AG04450 (cell line): ENCODE measurements at regions of chr9 and their contacts with region 1.

Region 1: DNA sequence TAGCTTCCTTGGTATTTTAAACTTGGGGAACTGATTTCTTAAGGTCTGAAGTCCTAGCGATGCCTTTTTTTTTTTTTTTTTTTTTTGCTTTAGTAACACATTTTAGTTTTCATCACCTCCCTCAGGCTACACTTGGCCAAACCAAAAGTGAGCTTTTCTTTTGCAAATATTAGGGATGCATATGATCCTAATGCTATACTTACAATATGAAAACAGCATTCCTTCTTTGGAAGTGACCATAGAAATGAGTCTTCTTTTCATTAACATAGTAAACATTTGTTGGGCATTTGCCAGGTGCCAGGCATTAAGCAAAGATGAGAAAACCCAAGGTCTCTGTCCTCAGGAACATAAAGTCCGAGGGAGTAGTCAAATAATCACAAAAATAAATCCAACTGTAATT is 189.8 kb downstream of the ALDH1A1 start:
- DNase-seq: no peak
- H3K4me3 ChIP-seq: no peak overlapping the region
- H3K27ac ChIP-seq: no peak overlapping the region
- H3K27me3 ChIP-seq: no peaks in the 10 kb centered on the region
- CTCF ChIP-seq: no peak

Region 2: DNA sequence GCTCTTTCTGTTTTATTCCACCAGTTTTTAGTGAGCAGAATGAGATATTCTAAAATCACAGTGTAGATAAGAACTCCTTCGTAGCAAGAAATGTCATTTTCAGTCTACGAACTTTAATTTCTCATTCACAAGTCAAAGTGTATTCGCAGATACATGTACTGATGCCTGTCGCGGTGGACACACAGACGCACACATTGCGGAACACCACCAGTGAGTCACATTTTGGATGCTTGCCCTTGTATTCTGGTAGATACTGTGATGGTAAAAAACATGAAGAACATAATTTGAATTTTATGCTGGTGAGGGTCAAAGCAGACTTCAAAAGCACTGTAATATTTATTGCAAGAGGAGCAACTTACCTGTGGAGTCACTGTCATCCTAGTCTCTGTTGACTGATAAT is 697.9 kb before region 1 on chr9:
- CTCF ChIA-PET with region 1: interaction called, 10 read pairs
- POLR2A ChIA-PET with region 1: no interaction called
- DNase-seq: no peak
- H3K4me3 ChIP-seq: no peak overlapping the region
- H3K27ac ChIP-seq: no peak overlapping the region
- H3K27me3 ChIP-seq: no peaks in the 10 kb centered on the region
- CTCF ChIP-seq: no peak

Region 3: GRCh38 chr9:72931437-72931836 is 168.4 kb after region 1 on chr9:
- CTCF ChIA-PET with region 1: no interaction called
- POLR2A ChIA-PET with region 1: no interaction called
- DNase-seq: no peak
- H3K4me3 ChIP-seq: no peak overlapping the region
- H3K27ac ChIP-seq: no peak overlapping the region
- H3K27me3 ChIP-seq: no peaks in the 10 kb centered on the region
- CTCF ChIP-seq: no peak